Activated CD4-positive, alpha-beta memory T cell treated with anti-CD3 and anti-CD28 coated beads, Interleukin-2, amount 10 ng/mL, durations not matched to agents 7 days and 5 days (primary cell): ENCODE measurements at regions of chr17 and their contacts with region 1.

Region 1: GRCh38 chr17:8383143-8383822 is at the start of gene RPL26:
- DNase-seq: peak; percentile 97
- H3K4me3 Mint-ChIP-seq: peak within 1 kb of the TSS; percentile 87
- H3K27ac Mint-ChIP-seq: peak within 1 kb of the TSS; percentile 75
- H3K4me1 Mint-ChIP-seq: peaks cover 67% of the 10 kb centered on the region
- H3K27me3 Mint-ChIP-seq: no peaks in the 10 kb centered on the region
- total RNA-seq, gene RPL26: 1,912 to 1,913 TPM

Region 2: DNA sequence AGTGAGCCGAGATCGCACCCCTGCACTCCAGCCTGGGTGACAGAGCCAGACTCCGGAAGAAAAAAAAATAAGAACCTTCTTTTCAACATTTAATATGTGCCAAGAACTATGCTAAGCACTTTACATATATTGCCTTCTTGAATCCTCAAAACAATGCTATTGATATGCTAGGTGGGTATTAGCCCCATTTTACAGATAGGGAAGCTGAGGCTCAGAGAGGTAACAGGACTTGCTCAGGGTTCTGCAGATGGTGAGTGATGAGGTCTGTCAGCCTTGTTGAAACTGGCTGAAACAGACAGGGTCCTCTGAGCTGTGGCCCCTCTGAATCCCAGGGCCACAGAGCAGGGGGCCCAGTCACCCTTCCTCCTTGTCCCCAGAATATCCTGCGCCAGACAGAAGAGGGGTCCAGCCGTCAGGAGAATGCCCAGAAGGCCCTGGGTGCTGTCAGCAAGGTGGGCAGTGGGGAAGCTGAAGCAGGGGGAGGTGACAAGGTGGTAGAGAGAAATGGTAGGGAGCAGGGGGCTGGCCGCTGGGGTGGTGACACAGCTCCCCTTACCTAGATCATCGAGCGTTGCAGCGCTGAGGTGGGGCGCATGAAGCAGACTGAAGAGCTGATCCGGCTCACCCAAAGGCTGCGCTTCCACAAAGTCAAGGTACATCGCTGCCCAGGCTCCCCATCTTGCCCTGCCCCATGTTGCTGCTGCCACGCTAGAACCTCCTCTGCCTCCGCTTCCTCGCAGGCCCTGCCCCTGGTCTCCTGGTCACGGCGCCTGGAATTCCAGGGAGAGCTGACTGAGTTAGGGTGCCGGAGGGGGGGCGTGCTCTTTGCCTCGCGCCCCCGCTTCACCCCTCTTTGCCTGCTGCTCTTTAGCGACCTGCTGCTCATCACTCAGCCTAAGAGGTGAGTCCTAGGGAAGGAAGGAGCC is 65.0 kb before region 1 on chr17:
- CTCF ChIA-PET with region 1: no interaction called
- POLR2A ChIA-PET with region 1: no interaction called
- DNase-seq: no peak
- H3K4me3 Mint-ChIP-seq: no peak overlapping the region
- H3K27ac Mint-ChIP-seq: no peak overlapping the region
- H3K4me1 Mint-ChIP-seq: no peaks in the 10 kb centered on the region
- H3K27me3 Mint-ChIP-seq: peaks cover 12% of the 10 kb centered on the region

Region 3: GRCh38 chr17:8393420-8394241 is 10.3 kb after region 1 on chr17:
- CTCF ChIA-PET with region 1: interaction called, 10 read pairs
- POLR2A ChIA-PET with region 1: interaction called, 20 read pairs
- DNase-seq: peak; percentile 63
- H3K4me3 Mint-ChIP-seq: no peak overlapping the region
- H3K27ac Mint-ChIP-seq: peak overlapping the region; percentile 79
- H3K4me1 Mint-ChIP-seq: peaks cover 16% of the 10 kb centered on the region
- H3K27me3 Mint-ChIP-seq: peaks cover 25% of the 10 kb centered on the region

Region 4: GRCh38 chr17:8518326-8518725 is 135.0 kb after region 1 on chr17:
- CTCF ChIA-PET with region 1: no interaction called
- POLR2A ChIA-PET with region 1: no interaction called
- DNase-seq: no peak
- H3K4me3 Mint-ChIP-seq: no peak overlapping the region
- H3K27ac Mint-ChIP-seq: no peak overlapping the region
- H3K4me1 Mint-ChIP-seq: no peaks in the 10 kb centered on the region
- H3K27me3 Mint-ChIP-seq: no peaks in the 10 kb centered on the region

Region 5: DNA sequence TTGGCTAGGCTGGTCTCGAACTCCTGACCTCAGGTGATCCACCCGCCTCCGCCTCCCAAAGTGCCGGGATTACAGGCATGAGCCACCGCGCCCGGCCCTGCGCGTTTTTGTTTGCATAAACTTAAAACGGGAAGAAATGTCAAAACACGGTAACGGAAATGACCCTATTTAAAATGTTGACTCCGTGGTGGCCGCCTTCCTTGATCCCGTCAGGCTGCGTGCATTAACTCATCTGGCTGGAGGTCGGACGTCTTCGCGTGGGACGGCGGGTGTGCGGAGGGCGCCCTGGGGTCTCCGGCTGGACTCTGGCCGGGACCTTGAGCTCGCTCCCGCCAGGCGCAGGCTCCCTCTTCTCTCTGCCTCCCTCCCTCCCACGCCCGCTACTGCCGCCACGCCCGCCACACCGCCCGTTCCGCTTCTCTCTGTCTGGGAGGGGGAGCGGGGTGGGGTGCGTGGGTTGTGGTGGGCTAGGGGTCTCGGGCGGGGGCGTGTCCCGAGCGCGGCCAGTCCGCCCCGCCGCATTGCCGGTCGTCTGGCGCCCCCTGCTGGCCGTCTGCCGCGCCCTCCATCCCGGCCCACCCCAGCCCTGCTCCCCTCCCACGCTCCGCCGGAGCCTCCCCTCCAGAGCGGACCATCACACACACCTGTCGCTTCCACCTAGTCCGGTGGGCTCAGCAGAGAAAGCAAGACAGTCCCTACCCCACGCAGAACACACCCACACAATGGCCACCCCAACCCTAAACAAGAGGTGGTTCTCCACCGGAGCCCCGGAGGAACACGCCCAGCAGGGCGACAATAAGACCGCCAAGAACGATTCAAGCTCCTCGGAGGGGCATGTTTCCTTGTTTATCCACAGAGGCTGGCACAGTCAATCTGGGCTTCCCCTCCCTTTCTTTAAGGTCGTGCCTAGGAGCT is 362.6 kb after region 1 on chr17:
- CTCF ChIA-PET with region 1: interaction called, 34 read pairs
- POLR2A ChIA-PET with region 1: interaction called, 8 read pairs
- DNase-seq: peak; percentile 78
- H3K4me3 Mint-ChIP-seq: peak overlapping the region; percentile 83
- H3K27ac Mint-ChIP-seq: peak overlapping the region; percentile 86
- H3K4me1 Mint-ChIP-seq: peaks cover 12% of the 10 kb centered on the region
- H3K27me3 Mint-ChIP-seq: peaks cover 7% of the 10 kb centered on the region